K562 (cell line): ENCODE measurements at regions of chr6 and their contacts with region 1.

Region 1: DNA sequence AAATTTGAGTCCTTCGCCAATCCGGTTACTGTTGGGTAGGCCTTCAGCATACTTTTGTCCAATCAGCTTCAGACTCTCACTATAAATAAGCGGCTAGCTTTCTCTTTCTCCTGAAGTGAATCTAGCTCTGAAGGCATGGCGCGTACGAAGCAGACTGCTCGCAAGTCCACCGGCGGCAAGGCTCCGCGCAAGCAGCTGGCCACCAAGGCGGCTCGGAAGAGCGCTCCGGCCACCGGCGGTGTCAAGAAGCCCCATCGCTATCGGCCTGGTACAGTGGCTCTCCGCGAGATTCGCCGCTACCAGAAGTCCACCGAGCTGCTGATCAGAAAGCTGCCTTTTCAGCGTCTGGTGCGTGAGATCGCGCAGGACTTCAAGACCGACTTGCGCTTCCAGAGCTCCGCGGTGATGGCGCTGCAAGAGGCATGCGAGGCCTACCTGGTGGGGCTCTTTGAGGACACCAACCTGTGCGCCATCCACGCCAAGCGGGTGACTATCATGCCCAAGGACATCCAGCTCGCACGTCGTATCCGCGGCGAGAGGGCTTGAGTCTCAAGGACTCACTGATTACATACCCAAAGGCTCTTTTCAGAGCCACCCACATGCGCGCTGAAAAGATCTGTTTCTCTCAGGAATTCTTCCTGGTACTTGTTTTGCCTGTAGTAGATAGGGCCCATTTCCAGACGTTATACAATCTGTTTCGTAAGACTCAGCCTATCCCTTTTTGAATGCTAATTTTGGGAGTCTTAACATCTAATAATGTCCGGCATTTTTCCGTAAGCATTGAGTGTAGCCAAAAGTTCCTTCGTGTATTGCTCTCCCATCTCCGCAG is 102.0 kb downstream of the OR2B2 start:
- DNase-seq: peak; percentile 70 to 96 (median 82)
- ATAC-seq: peak; percentile 60
- H3K4me3 ChIP-seq: peak overlapping the region; percentile 71
- H3K27ac ChIP-seq: peak overlapping the region; percentile 86
- H3K4me1 ChIP-seq: peaks cover 4 to 20% of the 10 kb centered on the region in 2 experiments; a peak in 4 of 5 replicates
- H3K27me3 ChIP-seq: no peaks in the 10 kb centered on the region
- CTCF ChIP-seq: peak in 2 of 3 experiments; percentile 25 to 36; a peak in 3 of 6 replicates
- EP300 ChIP-seq: 0 out of 2 replicates have a peak, but pooled peaks have one; percentile 2
- POLR2A ChIP-seq: peak; percentile 100
- RAD21 ChIP-seq: peak; percentile 10 to 35; a peak in 2 of 4 replicates

Region 2: DNA sequence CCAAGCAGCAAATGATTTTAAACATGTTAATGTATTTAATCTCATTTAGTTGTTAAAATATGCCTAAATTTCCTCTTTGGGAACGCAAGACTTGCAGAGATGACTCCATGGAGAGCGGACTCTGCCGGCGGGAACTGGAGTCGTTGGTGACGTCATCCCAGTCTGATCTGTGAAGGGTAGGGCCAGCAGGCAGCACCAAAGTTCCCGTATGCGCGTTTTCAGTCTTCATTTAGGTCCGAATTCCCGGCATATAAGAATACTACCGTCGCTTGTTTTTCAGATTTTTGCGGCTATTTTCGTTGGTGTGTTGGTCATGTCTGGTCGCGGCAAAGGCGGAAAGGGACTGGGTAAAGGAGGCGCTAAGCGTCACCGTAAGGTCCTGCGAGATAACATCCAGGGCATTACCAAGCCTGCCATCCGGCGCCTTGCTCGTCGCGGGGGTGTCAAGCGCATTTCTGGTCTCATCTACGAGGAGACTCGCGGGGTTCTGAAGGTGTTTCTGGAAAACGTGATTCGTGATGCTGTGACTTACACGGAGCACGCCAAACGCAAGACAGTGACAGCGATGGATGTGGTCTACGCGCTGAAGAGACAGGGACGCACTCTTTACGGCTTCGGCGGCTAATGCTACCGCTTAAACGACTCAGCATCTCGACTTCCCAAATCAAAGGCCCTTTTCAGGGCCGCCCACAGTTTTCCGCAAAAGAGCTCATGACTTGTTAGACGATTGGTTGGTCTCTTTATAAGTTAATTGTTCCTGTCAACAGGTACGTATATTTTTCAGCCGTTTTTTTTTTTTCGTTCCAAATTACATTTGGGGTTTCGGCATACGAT is 1605.6 kb before region 1 on chr6:
- CTCF ChIA-PET with region 1: no interaction called
- POLR2A ChIA-PET with region 1: no interaction called
- in situ Hi-C with region 1: loop called (anchors 25 kb)
- intact Hi-C with region 1: no loop called
- DNase-seq: peak; percentile 85 to 99 (median 92)
- ATAC-seq: peak; percentile 67
- H3K4me3 ChIP-seq: peak overlapping the region; percentile 57
- H3K27ac ChIP-seq: peak overlapping the region; percentile 99
- H3K4me1 ChIP-seq: peaks cover 9 to 21% of the 10 kb centered on the region in 2 experiments; a peak in 4 of 5 replicates
- H3K27me3 ChIP-seq: no peaks in the 10 kb centered on the region
- CTCF ChIP-seq: peak in 2 of 3 experiments; percentile 67 to 70; a peak in 5 of 6 replicates
- EP300 ChIP-seq: peak; percentile 95
- POLR2A ChIP-seq: peak; percentile 100
- RAD21 ChIP-seq: peak in 1 of 2 experiments; percentile 29; a peak in 2 of 4 replicates

Region 3: DNA sequence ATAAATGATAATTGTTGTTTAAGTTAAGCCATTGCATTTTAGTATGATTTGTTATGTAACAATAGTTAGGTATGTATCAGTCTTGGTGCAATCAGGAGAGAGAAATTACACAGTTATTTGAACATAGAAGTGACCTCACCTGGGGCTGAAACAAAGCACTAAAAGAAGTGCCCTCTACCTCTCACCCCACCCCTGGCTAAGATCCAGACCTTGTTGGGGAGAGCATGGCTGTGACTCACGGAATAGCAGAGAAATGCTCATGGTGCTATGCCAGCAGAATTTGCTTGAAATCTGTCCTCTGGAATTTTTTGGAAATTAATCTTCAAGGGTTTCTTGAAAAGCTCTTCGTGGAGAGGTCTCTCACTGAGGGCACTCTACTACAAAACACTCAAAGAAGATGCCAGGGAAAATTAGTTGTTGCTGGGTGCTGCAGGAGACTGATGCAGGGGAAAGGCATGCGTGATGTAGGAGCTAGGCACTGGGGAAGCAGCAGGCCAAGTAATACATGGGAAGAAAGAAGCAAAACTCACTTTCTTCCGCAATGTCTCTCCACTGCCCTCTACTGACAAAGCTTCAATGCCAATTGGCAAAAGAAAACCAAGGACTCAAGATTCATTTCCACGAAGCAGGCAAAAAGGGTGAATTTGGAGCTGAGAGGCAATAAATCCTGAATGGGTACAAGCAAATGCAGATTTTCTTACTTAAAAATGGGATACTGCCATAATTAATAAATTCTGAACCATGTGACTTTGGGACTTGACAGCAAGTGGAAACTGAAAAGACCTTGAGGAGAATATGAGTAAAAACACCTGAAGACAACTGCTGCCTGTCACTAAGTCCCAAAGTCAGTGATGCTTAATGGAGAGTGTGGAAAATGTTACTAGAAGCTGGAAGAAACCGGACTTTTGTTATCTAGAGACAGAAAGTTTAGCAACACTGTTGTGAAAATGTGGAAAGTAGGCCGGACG is 201.0 kb before region 1 on chr6:
- CTCF ChIA-PET with region 1: no interaction called
- POLR2A ChIA-PET with region 1: no interaction called
- in situ Hi-C with region 1: no loop called
- intact Hi-C with region 1: no loop called
- DNase-seq: peak in 3 of 4 experiments; percentile 34 to 86 (median 56)
- ATAC-seq: peak; percentile 62
- H3K4me3 ChIP-seq: no peak overlapping the region
- H3K27ac ChIP-seq: no peak overlapping the region
- H3K4me1 ChIP-seq: peaks cover 1 to 13% of the 10 kb centered on the region in 2 experiments; a peak in 4 of 5 replicates
- H3K27me3 ChIP-seq: no peaks in the 10 kb centered on the region
- CTCF ChIP-seq: peak; percentile 80 to 95 (median 88)
- EP300 ChIP-seq: peak; percentile 30; the same call in 1 of the 2 replicates
- POLR2A ChIP-seq: no peak
- RAD21 ChIP-seq: peak; percentile 81 to 92

Region 4: DNA sequence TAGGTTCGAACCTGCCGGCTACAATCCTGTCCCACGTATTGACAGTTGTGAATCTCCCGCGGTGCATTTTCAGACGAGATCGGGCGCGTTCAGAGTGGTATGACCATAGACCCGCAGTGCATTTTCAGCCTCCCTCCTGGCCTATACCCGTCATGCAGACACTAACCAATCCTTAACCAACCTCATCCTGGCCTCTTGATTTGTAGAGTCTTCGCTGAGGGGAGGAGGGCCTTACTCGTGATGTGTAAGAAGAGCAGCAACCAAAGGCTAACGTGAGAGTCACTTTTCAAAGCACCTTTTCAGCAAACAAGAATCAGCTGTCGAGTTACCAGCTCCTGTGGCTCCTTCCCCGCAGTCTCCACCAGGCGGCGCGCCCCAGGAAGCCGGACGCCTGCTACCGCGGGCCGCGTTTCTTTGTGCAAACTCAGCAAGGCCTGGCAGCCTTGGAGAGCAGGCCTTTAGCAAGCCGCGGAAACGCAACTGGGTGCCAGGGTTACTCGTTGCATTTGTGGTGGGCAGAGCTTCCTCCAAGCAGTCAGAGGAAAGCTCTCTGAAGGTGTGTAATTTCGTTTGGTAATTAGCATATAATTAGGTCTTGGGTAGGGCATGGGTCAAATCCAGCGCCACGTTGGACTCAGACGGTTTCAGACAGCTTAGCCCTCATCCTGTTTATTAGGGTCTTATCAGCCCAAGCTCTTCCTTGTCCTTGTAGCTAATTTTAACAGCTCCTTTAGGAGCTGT is 37.7 kb before region 1 on chr6:
- CTCF ChIA-PET with region 1: no interaction called
- POLR2A ChIA-PET with region 1: interaction called, 17 read pairs
- in situ Hi-C with region 1: no loop called
- intact Hi-C with region 1: no loop called
- DNase-seq: peak; percentile 83 to 95 (median 84)
- ATAC-seq: peak; percentile 92
- H3K4me3 ChIP-seq: no peak overlapping the region
- H3K27ac ChIP-seq: peak overlapping the region; percentile 75
- H3K4me1 ChIP-seq: peaks cover 22 to 40% of the 10 kb centered on the region in 2 experiments
- H3K27me3 ChIP-seq: no peaks in the 10 kb centered on the region
- CTCF ChIP-seq: peak; percentile 97 to 99 (median 97)
- EP300 ChIP-seq: peak; percentile 35
- POLR2A ChIP-seq: no peak
- RAD21 ChIP-seq: peak; percentile 94 to 97

Region 5: DNA sequence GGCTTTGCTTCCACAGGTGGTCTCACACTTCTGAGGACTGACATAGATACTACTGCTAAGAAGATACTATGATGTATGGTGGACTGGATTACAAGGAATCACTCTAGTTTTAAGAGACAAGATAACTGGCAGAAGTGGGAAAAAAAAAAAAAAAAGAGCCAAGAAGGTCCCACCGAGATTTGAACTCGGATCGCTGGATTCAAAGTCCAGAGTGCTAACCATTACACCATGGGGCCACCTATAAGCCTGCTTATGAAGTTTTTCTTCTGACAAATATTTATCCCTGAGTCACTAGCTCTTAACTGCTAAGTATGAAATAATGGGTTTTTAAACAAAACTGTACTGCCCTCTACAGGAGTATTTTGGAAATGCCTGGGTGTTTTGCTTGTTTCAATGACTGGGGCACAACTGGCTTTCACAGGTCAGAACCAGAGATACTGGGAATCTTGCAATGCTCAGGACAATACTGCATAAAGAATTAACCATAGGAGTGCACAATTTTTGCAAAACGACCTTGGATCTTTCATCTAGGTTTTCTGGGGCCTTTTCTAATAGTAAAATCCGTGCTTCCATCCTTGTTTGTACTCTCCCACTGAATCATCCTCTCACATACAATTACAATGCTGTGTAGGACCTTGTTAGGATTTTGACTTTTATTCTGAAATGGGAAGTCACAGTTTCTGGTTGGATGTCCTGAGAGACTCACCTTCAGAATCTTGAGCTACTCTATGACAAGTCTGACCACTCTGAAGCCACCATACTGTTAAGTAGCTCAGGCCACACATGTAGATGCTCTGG is 14.3 kb before region 1 on chr6:
- CTCF ChIA-PET with region 1: no interaction called
- POLR2A ChIA-PET with region 1: interaction called, 123 read pairs
- in situ Hi-C with region 1: no loop called
- intact Hi-C with region 1: no loop called
- DNase-seq: peak; percentile 66 to 93 (median 74)
- ATAC-seq: peak; percentile 53
- H3K4me3 ChIP-seq: no peak overlapping the region
- H3K27ac ChIP-seq: peak overlapping the region; percentile 2; the same call in 1 of the 3 replicates
- H3K4me1 ChIP-seq: peaks cover 13 to 55% of the 10 kb centered on the region in 2 experiments
- H3K27me3 ChIP-seq: no peaks in the 10 kb centered on the region
- CTCF ChIP-seq: peak; percentile 70 to 95 (median 88); a peak in 5 of 6 replicates
- EP300 ChIP-seq: peak; percentile 81
- POLR2A ChIP-seq: no peak
- RAD21 ChIP-seq: peak; percentile 82 to 89

Region 6: DNA sequence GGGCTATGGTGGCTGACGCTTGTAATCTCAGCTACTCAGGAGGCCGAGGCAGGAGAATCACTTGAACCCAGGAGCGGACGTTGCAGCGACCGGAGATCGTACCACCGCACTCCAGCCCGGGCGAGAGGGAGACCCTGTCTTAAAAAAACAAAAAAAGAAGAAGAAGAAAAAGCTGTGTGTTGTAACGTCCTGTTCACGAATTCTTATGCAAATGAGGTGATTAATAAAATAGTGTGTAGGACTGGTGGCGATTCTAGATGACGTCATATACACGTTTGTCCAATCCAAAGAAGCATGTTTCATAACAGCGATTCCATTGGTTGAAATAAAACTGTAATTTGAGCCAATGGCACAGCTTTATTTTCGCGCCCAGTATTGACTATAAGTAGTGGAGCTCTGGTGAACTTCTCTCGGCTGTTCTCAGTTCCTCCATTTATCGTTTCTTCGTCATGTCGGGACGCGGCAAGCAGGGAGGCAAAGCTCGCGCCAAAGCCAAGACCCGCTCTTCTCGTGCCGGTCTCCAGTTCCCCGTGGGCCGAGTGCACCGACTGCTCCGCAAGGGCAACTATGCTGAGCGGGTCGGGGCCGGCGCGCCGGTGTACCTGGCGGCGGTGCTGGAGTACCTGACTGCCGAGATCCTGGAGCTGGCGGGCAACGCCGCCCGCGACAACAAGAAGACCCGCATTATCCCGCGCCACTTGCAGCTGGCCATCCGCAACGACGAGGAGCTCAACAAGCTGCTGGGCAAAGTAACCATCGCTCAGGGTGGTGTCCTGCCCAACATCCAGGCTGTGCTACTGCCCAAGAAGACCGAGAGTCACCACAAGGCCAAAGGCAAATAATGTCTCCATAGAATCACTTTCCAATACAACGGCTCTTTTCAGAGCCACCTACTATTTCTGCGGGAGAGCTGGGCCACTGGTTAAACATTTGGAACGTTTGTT is 55.0 kb after region 1 on chr6:
- CTCF ChIA-PET with region 1: no interaction called
- POLR2A ChIA-PET with region 1: interaction called, 84 read pairs
- in situ Hi-C with region 1: no loop called
- intact Hi-C with region 1: no loop called
- DNase-seq: peak; percentile 38 to 84 (median 68)
- ATAC-seq: peak; percentile 49
- H3K4me3 ChIP-seq: peak overlapping the region; percentile 45
- H3K27ac ChIP-seq: peak overlapping the region; percentile 73
- H3K4me1 ChIP-seq: peaks cover 15 to 16% of the 10 kb centered on the region in 2 experiments; a peak in 4 of 5 replicates
- H3K27me3 ChIP-seq: no peaks in the 10 kb centered on the region
- CTCF ChIP-seq: no peak
- EP300 ChIP-seq: no peak
- POLR2A ChIP-seq: peak; percentile 96
- RAD21 ChIP-seq: no peak

Region 7: DNA sequence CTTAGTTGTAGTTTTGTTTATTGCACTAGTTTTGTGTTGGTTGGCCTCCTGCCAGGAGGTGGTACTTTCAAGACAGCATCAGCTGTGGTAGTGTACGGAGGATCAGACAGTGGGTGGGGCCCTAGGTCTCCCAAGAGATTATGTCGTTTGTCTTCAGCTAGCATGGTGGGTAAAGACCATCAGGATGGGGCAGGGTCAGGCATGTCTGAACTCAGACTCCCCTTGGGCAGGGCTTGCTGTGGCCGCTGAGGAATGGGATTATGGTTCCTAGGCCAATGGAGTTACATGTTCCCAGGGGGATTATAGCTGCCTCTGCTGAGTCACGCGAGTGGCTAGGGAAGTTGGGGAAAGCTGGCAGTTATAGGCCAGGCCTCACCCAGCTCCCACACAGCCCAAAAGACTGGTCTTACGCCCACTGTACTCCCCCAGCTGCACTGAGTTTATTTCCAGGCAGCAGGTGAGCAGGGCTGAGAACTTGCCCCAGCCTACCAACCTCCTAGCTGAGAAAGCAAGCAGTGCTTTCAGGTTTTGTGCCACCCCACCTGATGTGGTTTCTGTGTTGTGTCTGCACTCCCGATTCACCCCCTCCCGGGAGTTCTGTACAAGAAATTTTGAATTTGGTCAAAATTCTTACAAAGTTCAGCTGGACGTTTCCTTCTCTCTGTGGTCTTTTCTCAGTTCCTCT is 501.1 kb after region 1 on chr6:
- CTCF ChIA-PET with region 1: no interaction called
- POLR2A ChIA-PET with region 1: no interaction called
- in situ Hi-C with region 1: no loop called
- intact Hi-C with region 1: no loop called
- DNase-seq: no peak
- ATAC-seq: peak; percentile 56; the same call in 2 of the 3 replicates
- H3K4me3 ChIP-seq: no peak overlapping the region
- H3K27ac ChIP-seq: no peak overlapping the region
- H3K4me1 ChIP-seq: peaks cover 6 to 13% of the 10 kb centered on the region in 2 experiments; a peak in 4 of 5 replicates
- H3K27me3 ChIP-seq: no peaks in the 10 kb centered on the region
- CTCF ChIP-seq: no peak
- EP300 ChIP-seq: no peak
- POLR2A ChIP-seq: no peak
- RAD21 ChIP-seq: no peak